Activated CD4-positive, alpha-beta T cell treated with anti-CD3 and anti-CD28 coated beads for 36 hours (primary cell): ENCODE measurements at regions of chr5 and their contacts with region 1.

Region 1: GRCh38 chr5:139458580-139459406 is 3.8 kb downstream of the ECSCR start:
- DNase-seq: peak; percentile 90
- ATAC-seq: peak; percentile 91
- H3K4me3 Mint-ChIP-seq: peak overlapping the region; percentile 57
- H3K27ac Mint-ChIP-seq: peak overlapping the region; percentile 94
- H3K4me1 Mint-ChIP-seq: peaks cover 64% of the 10 kb centered on the region
- H3K27me3 Mint-ChIP-seq: no peaks in the 10 kb centered on the region

Region 2: DNA sequence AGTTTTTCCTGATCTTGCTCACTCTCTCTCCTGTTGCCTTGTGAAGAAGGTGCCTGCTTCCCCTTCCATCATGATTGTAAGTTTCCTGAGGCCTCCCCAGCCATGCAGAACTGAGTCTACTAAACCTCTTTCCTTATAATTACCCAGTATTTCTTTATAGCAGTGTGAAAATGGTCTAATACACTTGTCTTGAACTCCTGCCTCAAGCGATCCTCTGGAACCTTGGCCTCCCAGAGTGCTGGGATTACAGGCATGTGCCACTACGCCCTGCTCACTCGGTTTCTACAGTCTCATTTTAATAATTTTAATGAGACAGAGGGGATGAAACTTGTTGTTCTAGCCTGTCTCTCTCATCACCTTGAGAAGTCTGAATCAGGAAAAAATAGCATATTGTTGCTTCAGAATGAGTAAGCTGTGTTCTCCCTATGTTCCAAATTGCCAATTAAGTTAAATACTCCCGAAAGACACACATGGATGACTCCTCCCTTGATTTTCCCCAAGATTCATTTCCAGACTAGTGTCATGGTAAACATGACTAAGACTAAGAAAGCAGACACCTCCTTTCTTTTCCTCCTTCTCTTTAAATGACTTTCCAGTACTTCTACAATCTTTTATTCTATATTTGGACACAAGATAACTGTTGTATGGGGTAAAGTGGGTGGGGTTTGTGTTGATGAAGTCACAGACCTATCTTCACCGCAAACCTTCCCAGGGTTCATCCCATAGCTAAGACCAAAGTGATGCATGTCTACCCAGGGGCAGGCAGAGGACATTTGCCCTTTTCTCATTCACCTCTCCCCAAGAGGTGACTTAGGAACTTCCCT is 11.6 kb before region 1 on chr5:
- CTCF ChIA-PET with region 1: interaction called, 17 read pairs
- POLR2A ChIA-PET with region 1: interaction called, 10 read pairs
- intact Hi-C with region 1: loop called (anchors 1 kb)
- DNase-seq: peak; percentile 68
- ATAC-seq: peak; percentile 77
- H3K4me3 Mint-ChIP-seq: peak overlapping the region; percentile 1
- H3K27ac Mint-ChIP-seq: peak overlapping the region; percentile 92
- H3K4me1 Mint-ChIP-seq: peaks cover 66% of the 10 kb centered on the region
- H3K27me3 Mint-ChIP-seq: no peaks in the 10 kb centered on the region

Region 3: GRCh38 chr5:139474890-139475791 is 16.3 kb after region 1 on chr5:
- CTCF ChIA-PET with region 1: interaction called, 5 read pairs
- POLR2A ChIA-PET with region 1: interaction called, 4 read pairs
- intact Hi-C with region 1: loop called in 1 of 2 experiments (anchors 2 kb)
- DNase-seq: peak; percentile 41
- ATAC-seq: peak; percentile 13
- H3K4me3 Mint-ChIP-seq: peak overlapping the region; percentile 9
- H3K27ac Mint-ChIP-seq: peak overlapping the region; percentile 86
- H3K4me1 Mint-ChIP-seq: peaks cover 83% of the 10 kb centered on the region
- H3K27me3 Mint-ChIP-seq: no peaks in the 10 kb centered on the region